Heart right ventricle (tissue), 16 donors: ENCODE measurements at regions of chr7 and their contacts with region 1.

Region 1: DNA sequence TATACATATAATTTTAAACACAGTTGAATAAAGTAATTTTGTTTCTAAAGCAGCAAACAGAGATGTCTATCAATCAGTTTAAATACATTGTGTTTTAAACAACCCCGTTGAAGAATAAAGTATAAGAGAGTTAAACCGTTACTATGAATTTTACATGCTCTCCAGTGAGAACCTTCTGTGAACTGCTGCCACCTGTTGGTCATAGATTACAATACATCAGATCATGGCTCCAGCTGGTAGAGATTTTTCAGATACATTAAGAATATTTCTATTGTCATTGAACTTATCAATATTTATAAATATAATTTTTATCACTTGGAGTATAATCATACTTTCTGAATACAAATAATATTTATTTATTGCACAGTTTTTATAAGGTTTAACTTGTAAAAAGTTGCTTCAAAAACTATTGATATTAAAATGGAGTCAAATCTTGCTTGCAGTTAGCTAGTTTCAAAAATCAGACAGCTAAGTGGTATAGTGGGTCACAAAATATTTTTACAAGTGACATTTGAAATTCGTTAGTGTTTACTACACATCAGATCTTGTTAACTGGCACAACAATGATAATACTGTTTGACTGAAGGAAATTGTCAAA is 561.2 kb upstream of the PHF14 start:
- DNase-seq: peak in 1 of 2 donors; percentile 22
- ATAC-seq: peak in 1 of 8 donors; percentile 49
- H3K4me3 ChIP-seq: no peak overlapping the region
- H3K27ac ChIP-seq: no peak overlapping the region
- H3K4me1 ChIP-seq: no peaks in the 10 kb centered on the region
- H3K27me3 ChIP-seq: no peaks in the 10 kb centered on the region
- CTCF ChIP-seq: peak; percentile 51 to 89 (median 73)

Region 2: GRCh38 chr7:8418629-8419245 is 1993.8 kb before region 1 on chr7:
- intact Hi-C with region 1: loop called in 1 of 10 experiments (anchors 5 kb)
- DNase-seq: peak in 1 of 2 donors; percentile 42
- ATAC-seq: peak in 2 of 8 donors; percentile 53 to 63
- H3K4me3 ChIP-seq: no peak overlapping the region
- H3K27ac ChIP-seq: no peak overlapping the region
- H3K4me1 ChIP-seq: no peaks in the 10 kb centered on the region
- H3K27me3 ChIP-seq: peaks cover 0 to 18% (median 4%) of the 10 kb centered on the region in 7 donors
- CTCF ChIP-seq: peak; percentile 47 to 84 (median 79)

Region 3: GRCh38 chr7:10022957-10023356 is 389.6 kb before region 1 on chr7:
- intact Hi-C with region 1: loop called in 8 of 10 experiments (anchors 1 to 10 kb)
- DNase-seq: peak in 1 of 2 donors; percentile 11
- ATAC-seq: peak in 2 of 8 donors; percentile 13 to 51
- H3K4me3 ChIP-seq: no peak overlapping the region
- H3K27ac ChIP-seq: no peak overlapping the region
- H3K4me1 ChIP-seq: peaks cover 0 to 5% (median 0%) of the 10 kb centered on the region in 9 donors
- H3K27me3 ChIP-seq: no peaks in the 10 kb centered on the region
- CTCF ChIP-seq: peak in 7 of 9 donors; percentile 32 to 66 (median 51)

Region 4: DNA sequence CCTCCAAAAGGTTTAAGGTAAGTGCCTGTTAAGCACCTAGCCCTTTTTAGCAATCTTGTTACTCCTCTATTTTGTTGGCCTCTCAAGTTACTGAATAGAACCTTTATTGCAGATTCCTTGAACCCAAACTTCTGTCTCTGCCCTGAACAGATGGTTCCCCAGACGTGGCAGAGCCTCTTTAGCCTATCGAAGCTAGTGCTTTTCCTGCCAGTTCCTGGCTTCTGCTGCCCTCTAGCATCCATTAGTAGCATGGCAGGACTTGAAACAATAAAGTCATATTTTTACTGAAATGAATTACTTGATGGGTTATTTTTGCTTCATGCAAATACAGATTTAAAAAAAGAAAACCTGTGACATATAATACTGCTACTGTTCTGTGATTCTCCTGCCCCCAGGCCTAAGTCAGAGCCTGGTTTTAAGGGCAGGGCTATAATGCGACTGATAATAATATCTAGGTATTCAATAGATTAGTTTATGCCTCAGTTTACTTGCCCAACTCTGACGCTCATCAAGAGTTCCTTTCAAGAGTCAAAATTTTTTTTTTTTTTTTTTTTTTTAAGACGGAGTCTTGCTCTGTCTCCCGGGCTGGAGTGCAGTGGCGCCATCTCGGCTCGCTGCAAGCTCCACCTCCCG is 476.9 kb after region 1 on chr7:
- intact Hi-C with region 1: loop called in 1 of 10 experiments (anchors 5 kb)
- DNase-seq: peak in 1 of 2 donors; percentile 6
- ATAC-seq: peak in 2 of 8 donors; percentile 49 to 52
- H3K4me3 ChIP-seq: no peak overlapping the region
- H3K27ac ChIP-seq: no peak overlapping the region
- H3K4me1 ChIP-seq: no peaks in the 10 kb centered on the region
- H3K27me3 ChIP-seq: no peaks in the 10 kb centered on the region
- CTCF ChIP-seq: peak; percentile 36 to 78 (median 68)